ENCODE measurements at regions of chr6 and their contacts with region 1.

Region 1: DNA sequence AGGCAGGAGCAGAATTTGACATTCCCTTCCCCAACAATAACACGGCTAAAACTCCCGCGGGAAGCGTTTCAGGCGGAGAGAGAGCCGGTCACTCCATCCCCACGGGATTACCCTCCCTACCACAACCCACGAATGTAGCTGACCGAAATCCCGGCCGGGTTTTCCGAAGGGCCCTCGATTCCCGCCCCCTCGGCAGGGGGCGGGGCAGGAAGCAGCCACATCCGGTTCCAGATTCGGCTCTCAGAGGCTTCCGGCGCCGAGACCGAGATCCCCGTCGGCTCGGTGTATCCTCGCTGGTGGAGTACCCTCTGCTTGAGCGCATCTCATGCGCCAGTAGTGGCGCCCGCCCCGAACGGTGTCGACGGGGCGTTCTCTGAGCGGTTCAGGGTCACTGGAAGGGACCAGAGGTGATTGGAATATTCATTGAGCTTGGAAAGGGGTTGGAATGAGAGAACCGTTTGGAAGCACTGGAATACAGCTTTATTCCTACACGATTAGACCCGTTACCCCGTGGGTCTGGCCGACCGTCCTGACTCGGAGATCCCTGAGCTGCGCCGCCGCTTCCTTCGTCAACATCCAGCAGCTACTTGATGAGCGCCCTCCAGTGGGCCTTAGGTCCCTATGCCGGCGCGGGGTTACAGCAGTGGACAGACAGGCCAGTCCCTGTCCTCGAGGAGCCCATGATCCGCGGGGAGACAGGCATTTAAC is 649 bp upstream of the RGL2 start:
- DNase-seq: peak; percentile 90
- ATAC-seq: peak; percentile 67
- H3K4me3 Mint-ChIP-seq: peak overlapping the region; percentile 96
- H3K27ac Mint-ChIP-seq: peak overlapping the region; percentile 98
- H3K4me1 Mint-ChIP-seq: peaks cover 34% of the 10 kb centered on the region
- H3K27me3 Mint-ChIP-seq: no peaks in the 10 kb centered on the region
- CTCF ChIP-seq: no peak

Region 2: DNA sequence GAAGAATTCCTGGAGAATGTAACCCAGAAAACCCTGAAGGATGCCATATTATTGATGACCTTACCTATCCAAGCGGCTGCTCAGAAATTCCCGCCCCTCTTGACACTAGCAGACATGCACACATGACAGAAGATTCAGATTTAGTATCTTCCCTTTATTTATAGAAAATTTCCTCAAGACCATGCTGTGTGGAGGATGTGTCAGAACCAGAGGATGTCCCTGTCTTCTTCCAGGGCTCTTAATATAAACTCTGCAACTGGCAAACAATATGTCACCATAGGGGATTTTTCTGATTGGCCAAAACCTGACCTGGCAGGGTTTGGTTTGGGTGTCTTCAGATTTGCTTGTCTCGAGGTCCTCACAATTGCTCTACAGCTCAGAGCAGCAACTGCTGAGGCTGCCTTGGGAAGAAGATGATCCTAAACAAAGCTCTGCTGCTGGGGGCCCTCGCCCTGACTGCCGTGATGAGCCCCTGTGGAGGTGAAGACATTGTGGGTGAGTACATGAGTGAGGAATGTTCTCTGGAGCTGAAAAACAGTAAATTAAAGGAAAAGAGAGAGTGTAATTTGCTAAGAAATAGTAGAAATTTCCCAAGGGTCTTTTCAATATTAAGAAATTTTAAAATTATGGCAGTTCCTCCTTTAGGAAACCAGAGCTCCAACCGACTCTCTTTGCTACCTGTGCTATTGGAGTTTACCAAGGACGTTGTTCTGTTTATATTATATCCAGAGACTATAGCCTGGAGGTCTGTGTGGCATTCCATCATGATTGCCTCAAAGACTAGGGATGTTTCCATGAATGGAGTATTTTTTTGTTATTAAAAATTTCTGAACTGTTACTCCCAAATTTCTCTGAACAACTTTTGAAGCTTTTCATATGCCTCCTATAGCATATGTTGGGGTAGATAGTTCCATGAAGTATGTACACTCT is 558.1 kb before region 1 on chr6 and contains the start of gene HLA-DQA2:
- CTCF ChIA-PET with region 1: no interaction called
- POLR2A ChIA-PET with region 1: interaction called, 10 read pairs
- intact Hi-C with region 1: no loop called
- DNase-seq: peak; percentile 41
- ATAC-seq: peak; percentile 99
- H3K4me3 Mint-ChIP-seq: peak within 1 kb of the TSS; percentile 81
- H3K27ac Mint-ChIP-seq: peak within 1 kb of the TSS; percentile 83
- H3K4me1 Mint-ChIP-seq: peaks cover 6% of the 10 kb centered on the region
- H3K27me3 Mint-ChIP-seq: peaks cover 19% of the 10 kb centered on the region
- CTCF ChIP-seq: no peak
- total RNA-seq, gene HLA-DQA2: 231 and 237 TPM in 2 replicates

Region 3: GRCh38 chr6:33143113-33143770 is 156.1 kb before region 1 on chr6:
- CTCF ChIA-PET with region 1: no interaction called
- POLR2A ChIA-PET with region 1: no interaction called
- intact Hi-C with region 1: no loop called
- DNase-seq: no peak
- ATAC-seq: no peak
- H3K4me3 Mint-ChIP-seq: no peak overlapping the region
- H3K27ac Mint-ChIP-seq: no peak overlapping the region
- H3K4me1 Mint-ChIP-seq: peaks cover 26% of the 10 kb centered on the region
- H3K27me3 Mint-ChIP-seq: no peaks in the 10 kb centered on the region
- CTCF ChIP-seq: no peak

Region 4: DNA sequence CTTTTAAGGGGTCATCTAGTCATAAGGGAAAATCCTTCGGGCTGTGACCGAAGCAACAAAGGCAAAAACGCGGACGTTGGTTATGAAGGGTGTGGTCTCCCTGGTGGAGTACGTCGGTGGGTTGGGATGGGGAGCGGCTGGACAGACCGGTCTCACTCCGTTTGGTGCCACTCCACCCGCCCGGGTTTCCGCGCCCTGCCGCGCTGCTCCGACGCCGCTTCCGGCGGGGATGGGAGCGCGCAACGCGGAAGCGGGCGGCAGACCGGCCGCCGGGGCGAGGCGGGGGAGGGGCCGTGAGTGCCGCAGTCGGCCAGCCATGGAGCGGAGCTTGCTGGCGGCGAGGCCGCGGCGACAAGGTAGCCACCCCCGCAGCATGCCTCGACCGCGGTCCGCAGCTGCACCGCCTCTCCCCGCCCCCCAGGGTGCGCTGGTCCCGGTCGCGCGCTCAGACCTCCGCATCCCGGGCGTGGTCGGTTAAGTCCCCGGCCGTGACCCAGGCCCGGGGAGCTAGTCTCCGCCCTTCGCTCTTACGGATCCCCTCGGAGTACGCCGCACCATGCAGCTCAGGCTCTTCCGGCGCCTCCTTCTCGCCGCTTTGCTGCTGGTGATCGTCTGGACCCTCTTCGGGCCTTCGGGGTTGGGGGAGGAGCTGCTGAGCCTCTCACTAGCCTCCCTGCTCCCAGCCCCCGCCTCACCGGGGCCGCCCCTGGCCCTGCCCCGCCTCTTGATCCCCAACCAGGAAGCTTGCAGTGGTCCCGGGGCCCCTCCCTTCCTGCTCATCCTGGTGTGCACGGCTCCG is 22.3 kb before region 1 on chr6 and contains the start of gene B3GALT4:
- CTCF ChIA-PET with region 1: interaction called, 13 read pairs
- POLR2A ChIA-PET with region 1: interaction called, 54 read pairs
- intact Hi-C with region 1: loop called (anchors 1 kb)
- DNase-seq: peak; percentile 77
- ATAC-seq: peak; percentile 68
- H3K4me3 Mint-ChIP-seq: peak within 1 kb of the TSS; percentile 92
- H3K27ac Mint-ChIP-seq: peak within 1 kb of the TSS; percentile 100
- H3K4me1 Mint-ChIP-seq: peaks cover 62% of the 10 kb centered on the region
- H3K27me3 Mint-ChIP-seq: no peaks in the 10 kb centered on the region
- CTCF ChIP-seq: no peak
- total RNA-seq, gene B3GALT4: 19.1 and 19.4 TPM in 2 replicates

Region 5: GRCh38 chr6:33323623-33323948 is 24.2 kb after region 1 on chr6:
- CTCF ChIA-PET with region 1: interaction called, 5 read pairs
- POLR2A ChIA-PET with region 1: interaction called, 49 read pairs
- intact Hi-C with region 1: loop called (anchors 1 kb)
- DNase-seq: peak; percentile 38
- ATAC-seq: no peak
- H3K4me3 Mint-ChIP-seq: peak overlapping the region; percentile 95
- H3K27ac Mint-ChIP-seq: peak overlapping the region; percentile 93
- H3K4me1 Mint-ChIP-seq: peaks cover 61% of the 10 kb centered on the region
- H3K27me3 Mint-ChIP-seq: no peaks in the 10 kb centered on the region
- CTCF ChIP-seq: no peak

Region 6: GRCh38 chr6:33425668-33426577 is 126.5 kb after region 1 on chr6:
- CTCF ChIA-PET with region 1: no interaction called
- POLR2A ChIA-PET with region 1: interaction called, 4 read pairs
- intact Hi-C with region 1: loop called (anchors 5 kb)
- DNase-seq: peak; percentile 68
- ATAC-seq: peak; percentile 60
- H3K4me3 Mint-ChIP-seq: peak overlapping the region; percentile 87
- H3K27ac Mint-ChIP-seq: peak overlapping the region; percentile 89
- H3K4me1 Mint-ChIP-seq: peaks cover 66% of the 10 kb centered on the region
- H3K27me3 Mint-ChIP-seq: no peaks in the 10 kb centered on the region
- CTCF ChIP-seq: no peak

Region 7: DNA sequence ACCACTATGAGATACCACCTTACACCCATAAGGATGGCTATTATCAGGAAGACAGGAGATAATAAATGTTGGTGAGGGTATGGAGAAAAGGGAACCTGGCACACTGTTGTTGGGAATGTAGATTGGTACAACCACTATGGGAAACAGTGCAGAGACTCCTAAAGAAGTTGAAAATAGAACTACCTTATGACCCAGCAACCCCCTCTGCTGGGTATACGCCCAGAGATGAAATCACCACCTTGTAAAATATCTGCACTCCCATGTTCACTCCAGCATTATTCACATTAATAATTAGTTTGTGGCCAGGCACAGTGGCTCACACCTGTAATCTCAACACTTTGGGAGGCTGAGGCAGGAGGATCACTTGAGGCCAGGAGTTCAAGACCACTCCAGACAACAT is 181.8 kb after region 1 on chr6:
- CTCF ChIA-PET with region 1: no interaction called
- POLR2A ChIA-PET with region 1: no interaction called
- intact Hi-C with region 1: no loop called
- DNase-seq: no peak
- ATAC-seq: no peak
- H3K4me3 Mint-ChIP-seq: no peak overlapping the region
- H3K27ac Mint-ChIP-seq: no peak overlapping the region
- H3K4me1 Mint-ChIP-seq: no peaks in the 10 kb centered on the region
- H3K27me3 Mint-ChIP-seq: peaks cover 2% of the 10 kb centered on the region
- CTCF ChIP-seq: no peak